ENCODE measurements at regions of chr11 and their contacts with region 1.

Region 1: GRCh38 chr11:69642913-69643632 is 2.1 kb downstream of the CCND1 start:
- DNase-seq: peak; percentile 50
- ATAC-seq: peak; percentile 57
- H3K4me3 ChIP-seq: peak overlapping the region; percentile 86 to 99 (median 94)
- H3K27ac ChIP-seq: peak overlapping the region; percentile 87
- H3K4me1 ChIP-seq: peaks cover 27% of the 10 kb centered on the region
- H3K27me3 ChIP-seq: peaks cover 0 to 5% of the 10 kb centered on the region in 2 experiments; a peak in 1 of 5 replicates
- CTCF ChIP-seq: peak; percentile 89
- EP300 ChIP-seq: no peak
- POLR2A ChIP-seq: no peak; a peak in 1 of 4 replicates
- RAD21 ChIP-seq: peak; percentile 98

Region 2: DNA sequence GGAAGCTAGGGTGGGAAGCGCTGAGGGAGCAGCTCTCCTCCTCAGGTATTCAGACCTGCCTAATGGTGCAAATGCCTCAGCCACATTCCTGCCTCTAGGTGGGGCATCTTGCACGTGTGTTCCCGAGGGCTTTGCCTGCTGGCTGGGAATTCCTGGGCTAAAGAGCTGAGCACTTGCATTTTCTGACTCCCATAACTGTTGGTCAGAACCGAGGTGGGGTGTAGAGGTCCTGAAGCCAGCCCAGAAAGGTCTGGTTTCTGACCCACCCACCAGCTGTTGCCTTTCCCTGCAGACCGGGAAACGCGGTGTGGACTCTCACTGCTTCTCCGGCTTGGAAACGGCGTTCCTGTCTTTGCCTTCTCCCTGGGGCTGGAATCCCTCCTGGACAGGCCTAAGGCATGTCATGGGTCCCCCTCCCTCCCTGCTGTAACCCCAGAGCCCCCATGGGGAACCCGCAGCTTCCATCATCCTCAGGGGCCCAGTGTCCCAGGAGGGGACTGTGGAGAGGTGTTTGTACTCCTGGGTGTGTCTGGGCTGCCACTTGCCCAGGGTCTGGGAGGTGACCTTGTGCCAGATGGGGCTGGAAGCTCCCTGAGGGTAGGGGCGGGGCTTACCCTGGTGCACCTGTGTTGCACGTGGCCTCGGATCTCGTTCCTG is 511.3 kb before region 1 on chr11:
- CTCF ChIA-PET with region 1: interaction called, 9 read pairs
- POLR2A ChIA-PET with region 1: interaction called, 7 read pairs
- in situ Hi-C with region 1: no loop called
- intact Hi-C with region 1: loop called (anchors 5 kb)
- DNase-seq: peak; percentile 80
- ATAC-seq: peak; percentile 96
- H3K4me3 ChIP-seq: no peak overlapping the region; a peak in 1 of 6 replicates
- H3K27ac ChIP-seq: no peak overlapping the region
- H3K4me1 ChIP-seq: peaks cover 6% of the 10 kb centered on the region; the same call in 1 of the 2 replicates
- H3K27me3 ChIP-seq: 0 out of 5 replicates have a peak, but pooled peaks cover 0 to 2% of the 10 kb centered on the region in 2 experiments
- CTCF ChIP-seq: peak; percentile 97
- EP300 ChIP-seq: peak in 1 of 2 experiments; percentile 24; a peak in 1 of 4 replicates
- POLR2A ChIP-seq: no peak
- RAD21 ChIP-seq: peak; percentile 82

Region 3: DNA sequence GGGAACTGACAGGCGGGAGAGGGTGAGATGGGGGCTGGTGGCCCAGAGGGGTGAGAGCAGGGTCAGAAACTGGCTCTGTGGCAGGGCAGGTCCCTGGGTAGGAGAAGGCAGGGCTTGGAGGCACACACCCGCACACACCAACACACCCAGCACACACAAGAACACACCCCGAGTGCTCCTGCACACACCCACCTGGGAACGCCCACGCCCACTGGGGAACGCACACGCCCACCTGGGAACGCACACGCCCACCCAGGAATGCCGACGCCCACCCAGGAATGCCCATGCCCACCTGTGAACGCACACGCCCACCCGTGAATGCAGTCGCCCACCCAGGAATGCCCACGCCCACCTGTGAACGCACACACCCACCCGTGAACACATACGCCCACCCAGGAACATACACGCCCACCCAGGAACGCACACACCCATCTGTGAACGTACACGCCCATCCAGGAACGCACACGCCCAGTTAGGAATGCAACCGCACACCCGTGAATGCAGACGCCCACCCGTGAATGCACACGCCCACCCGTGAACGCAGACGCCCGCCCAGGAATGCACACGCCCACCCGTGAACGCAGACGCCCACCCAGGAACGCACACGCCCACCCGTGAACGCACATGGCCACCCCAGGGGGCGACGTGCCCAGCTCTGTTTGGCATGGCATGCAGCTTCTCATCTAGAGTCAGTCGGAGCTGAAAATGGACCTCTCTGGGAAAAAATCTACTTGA is 266.0 kb before region 1 on chr11:
- CTCF ChIA-PET with region 1: no interaction called
- POLR2A ChIA-PET with region 1: no interaction called
- in situ Hi-C with region 1: loop called (anchors 5 kb)
- intact Hi-C with region 1: no loop called
- DNase-seq: no peak
- ATAC-seq: no peak
- H3K4me3 ChIP-seq: no peak overlapping the region
- H3K27ac ChIP-seq: no peak overlapping the region
- H3K4me1 ChIP-seq: peaks cover 35% of the 10 kb centered on the region
- H3K27me3 ChIP-seq: peaks cover 4 to 42% of the 10 kb centered on the region in 2 experiments
- CTCF ChIP-seq: no peak
- EP300 ChIP-seq: no peak
- POLR2A ChIP-seq: no peak
- RAD21 ChIP-seq: no peak

Region 4: DNA sequence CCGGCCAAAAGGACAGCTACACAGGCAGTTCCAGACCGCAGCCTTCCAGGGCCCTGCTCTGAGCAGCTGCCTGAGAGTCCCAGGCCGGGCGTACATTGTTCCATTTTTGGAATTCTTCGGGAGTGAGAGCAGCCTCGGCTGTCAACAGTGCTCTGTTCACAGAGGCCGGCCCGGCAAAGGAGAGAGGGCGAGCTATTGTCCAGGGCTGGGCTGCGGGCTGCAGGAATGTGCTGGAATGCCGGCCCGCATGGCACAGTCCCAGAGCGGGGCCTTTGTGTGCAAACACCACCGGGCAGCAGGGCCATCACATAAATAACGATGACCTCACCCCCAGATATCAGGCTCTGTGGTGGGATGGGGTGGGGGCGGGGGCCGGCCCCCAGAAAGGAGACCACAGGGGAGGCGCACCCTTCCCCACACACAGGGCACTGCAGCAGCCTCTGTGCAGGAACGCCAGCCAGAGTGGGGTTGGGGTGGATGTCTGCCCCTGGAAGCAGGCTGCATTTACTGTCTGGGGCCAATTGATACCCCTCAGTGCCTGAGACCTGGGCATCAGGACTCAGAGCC is 145.8 kb before region 1 on chr11:
- CTCF ChIA-PET with region 1: no interaction called
- POLR2A ChIA-PET with region 1: interaction called, 5 read pairs
- in situ Hi-C with region 1: no loop called
- intact Hi-C with region 1: loop called (anchors 10 kb)
- DNase-seq: peak; percentile 97
- ATAC-seq: peak; percentile 97
- H3K4me3 ChIP-seq: peak overlapping the region in 1 of 3 experiments; percentile 35; a peak in 1 of 6 replicates
- H3K27ac ChIP-seq: peak overlapping the region; percentile 14
- H3K4me1 ChIP-seq: peaks cover 64% of the 10 kb centered on the region
- H3K27me3 ChIP-seq: peaks cover 3 to 4% of the 10 kb centered on the region in 2 experiments; a peak in 2 of 5 replicates
- CTCF ChIP-seq: no peak
- EP300 ChIP-seq: peak; percentile 65 to 76; a peak in 2 of 4 replicates
- POLR2A ChIP-seq: no peak
- RAD21 ChIP-seq: peak; percentile 48

Region 5: GRCh38 chr11:69654569-69655327 is 11.7 kb after region 1 on chr11:
- CTCF ChIA-PET with region 1: no interaction called
- POLR2A ChIA-PET with region 1: interaction called, 40 read pairs
- in situ Hi-C with region 1: no loop called
- intact Hi-C with region 1: no loop called
- DNase-seq: peak; percentile 94
- ATAC-seq: peak; percentile 58
- H3K4me3 ChIP-seq: peak overlapping the region in 1 of 3 experiments; percentile 48; a peak in 2 of 6 replicates
- H3K27ac ChIP-seq: peak overlapping the region; percentile 88
- H3K4me1 ChIP-seq: peaks cover 69% of the 10 kb centered on the region
- H3K27me3 ChIP-seq: no peaks in the 10 kb centered on the region
- CTCF ChIP-seq: peak; percentile 57
- EP300 ChIP-seq: peak; percentile 71 to 88; a peak in 3 of 4 replicates
- POLR2A ChIP-seq: peak; percentile 57 to 62
- RAD21 ChIP-seq: 0 out of 2 replicates have a peak, but pooled peaks have one; percentile 7

Region 6: GRCh38 chr11:69683764-69684333 is 40.8 kb after region 1 on chr11:
- CTCF ChIA-PET with region 1: interaction called, 9 read pairs
- POLR2A ChIA-PET with region 1: interaction called, 12 read pairs
- in situ Hi-C with region 1: no loop called
- intact Hi-C with region 1: no loop called
- DNase-seq: peak; percentile 80
- ATAC-seq: peak; percentile 76
- H3K4me3 ChIP-seq: no peak overlapping the region
- H3K27ac ChIP-seq: no peak overlapping the region
- H3K4me1 ChIP-seq: peaks cover 50% of the 10 kb centered on the region
- H3K27me3 ChIP-seq: peaks cover 0 to 5% of the 10 kb centered on the region in 2 experiments; a peak in 2 of 5 replicates
- CTCF ChIP-seq: peak; percentile 96
- EP300 ChIP-seq: no peak
- POLR2A ChIP-seq: no peak
- RAD21 ChIP-seq: peak; percentile 87